CD4-positive, alpha-beta memory T cell (primary cell): ENCODE measurements at regions of chr2 and their contacts with region 1.

Region 1: GRCh38 chr2:157898591-157898996 is 22.5 kb upstream of the ACVR1 start:
- DNase-seq: peak in 4 of 5 donors; percentile 15 to 83 (median 32)
- H3K4me3 ChIP-seq: peak overlapping the region in 1 of 2 donors; percentile 11
- H3K4me3 Mint-ChIP-seq: peak overlapping the region; percentile 40 to 95 (median 90)
- H3K27ac ChIP-seq: peak overlapping the region; percentile 51
- H3K27ac Mint-ChIP-seq: peak overlapping the region; percentile 96 to 100 (median 99)
- H3K4me1 ChIP-seq: peaks cover 77% of the 10 kb centered on the region
- H3K4me1 Mint-ChIP-seq: peaks cover 62 to 79% (median 72%) of the 10 kb centered on the region in 4 donors
- H3K27me3 ChIP-seq: no peaks in the 10 kb centered on the region
- H3K27me3 Mint-ChIP-seq: no peaks in the 10 kb centered on the region

Region 2: GRCh38 chr2:157404363-157404762 is 494.2 kb before region 1 on chr2:
- CTCF ChIA-PET with region 1: interaction called, 3 read pairs
- POLR2A ChIA-PET with region 1: interaction called, 6 read pairs
- intact Hi-C with region 1: loop called (anchors 2 kb)
- DNase-seq: peak; percentile 79 to 87 (median 85)
- H3K4me3 ChIP-seq: no peak overlapping the region
- H3K4me3 Mint-ChIP-seq: peak overlapping the region; percentile 49 to 85 (median 68)
- H3K27ac ChIP-seq: peak overlapping the region; percentile 51
- H3K27ac Mint-ChIP-seq: peak overlapping the region; percentile 95 to 100 (median 99)
- H3K4me1 ChIP-seq: peaks cover 60% of the 10 kb centered on the region
- H3K4me1 Mint-ChIP-seq: peaks cover 52 to 76% (median 63%) of the 10 kb centered on the region in 4 donors
- H3K27me3 ChIP-seq: no peaks in the 10 kb centered on the region
- H3K27me3 Mint-ChIP-seq: no peaks in the 10 kb centered on the region

Region 3: GRCh38 chr2:157777427-157777826 is 121.2 kb before region 1 on chr2:
- CTCF ChIA-PET with region 1: interaction called, 5 read pairs
- POLR2A ChIA-PET with region 1: interaction called, 4 read pairs
- intact Hi-C with region 1: loop called (anchors 2 kb)
- DNase-seq: peak in 4 of 5 donors; percentile 35 to 49 (median 37)
- H3K4me3 ChIP-seq: no peak overlapping the region
- H3K4me3 Mint-ChIP-seq: no peak overlapping the region
- H3K27ac ChIP-seq: no peak overlapping the region
- H3K27ac Mint-ChIP-seq: no peak overlapping the region
- H3K4me1 ChIP-seq: no peaks in the 10 kb centered on the region
- H3K4me1 Mint-ChIP-seq: peaks cover 8 to 13% (median 8%) of the 10 kb centered on the region in 4 donors
- H3K27me3 ChIP-seq: no peaks in the 10 kb centered on the region
- H3K27me3 Mint-ChIP-seq: no peaks in the 10 kb centered on the region

Region 4: GRCh38 chr2:157876066-157876787 is 22.4 kb before region 1 on chr2 and contains the start of gene ACVR1:
- CTCF ChIA-PET with region 1: interaction called, 39 read pairs
- POLR2A ChIA-PET with region 1: interaction called, 308 read pairs
- intact Hi-C with region 1: loop called (anchors 1 kb)
- DNase-seq: peak; percentile 78 to 90 (median 80)
- H3K4me3 ChIP-seq: peak within 1 kb of the TSS; percentile 74 to 76
- H3K4me3 Mint-ChIP-seq: peak within 1 kb of the TSS; percentile 94 to 100 (median 96)
- H3K27ac ChIP-seq: peak within 1 kb of the TSS; percentile 66
- H3K27ac Mint-ChIP-seq: peak within 1 kb of the TSS; percentile 88 to 96 (median 93)
- H3K4me1 ChIP-seq: peaks cover 71% of the 10 kb centered on the region
- H3K4me1 Mint-ChIP-seq: peaks cover 46 to 69% (median 60%) of the 10 kb centered on the region in 4 donors
- H3K27me3 ChIP-seq: no peaks in the 10 kb centered on the region
- H3K27me3 Mint-ChIP-seq: no peaks in the 10 kb centered on the region
- total RNA-seq, gene ACVR1: 26.9 to 31.9 TPM

Region 5: GRCh38 chr2:158006961-158007719 is 108.5 kb after region 1 on chr2:
- CTCF ChIA-PET with region 1: interaction called, 10 read pairs
- POLR2A ChIA-PET with region 1: interaction called, 3 read pairs
- intact Hi-C with region 1: loop called (anchors 1 kb)
- DNase-seq: no peak
- H3K4me3 ChIP-seq: no peak overlapping the region
- H3K4me3 Mint-ChIP-seq: no peak overlapping the region
- H3K27ac ChIP-seq: no peak overlapping the region
- H3K27ac Mint-ChIP-seq: peak overlapping the region in 1 of 7 donors; percentile 15
- H3K4me1 ChIP-seq: no peaks in the 10 kb centered on the region
- H3K4me1 Mint-ChIP-seq: peaks cover 3 to 6% (median 5%) of the 10 kb centered on the region in 4 donors
- H3K27me3 ChIP-seq: no peaks in the 10 kb centered on the region
- H3K27me3 Mint-ChIP-seq: peaks cover 1 to 6% of the 10 kb centered on the region in 2 donors

Region 6: DNA sequence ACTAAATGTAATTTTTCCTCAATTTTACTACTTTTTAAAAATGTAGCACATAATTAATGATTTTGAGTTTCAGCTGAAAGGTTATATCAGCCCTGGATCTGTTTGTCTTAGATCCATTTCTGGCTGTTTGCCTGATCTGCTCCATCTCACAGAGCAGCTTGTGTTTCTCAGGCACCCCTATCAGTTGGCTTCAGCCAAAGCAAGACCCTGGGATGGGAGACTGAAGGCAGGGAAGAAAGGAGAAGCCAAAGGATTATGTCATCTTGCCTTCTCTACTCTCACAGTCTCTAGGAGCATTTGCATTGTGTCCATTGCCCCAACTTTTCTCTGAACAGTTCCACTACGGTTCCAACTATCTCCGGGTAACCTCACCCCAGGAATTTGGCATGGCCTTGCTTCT is 447.4 kb after region 1 on chr2:
- CTCF ChIA-PET with region 1: no interaction called
- POLR2A ChIA-PET with region 1: no interaction called
- intact Hi-C with region 1: no loop called
- DNase-seq: no peak
- H3K4me3 ChIP-seq: no peak overlapping the region
- H3K4me3 Mint-ChIP-seq: no peak overlapping the region
- H3K27ac ChIP-seq: no peak overlapping the region
- H3K27ac Mint-ChIP-seq: no peak overlapping the region
- H3K4me1 ChIP-seq: no peaks in the 10 kb centered on the region
- H3K4me1 Mint-ChIP-seq: no peaks in the 10 kb centered on the region
- H3K27me3 ChIP-seq: no peaks in the 10 kb centered on the region
- H3K27me3 Mint-ChIP-seq: peaks cover 2 to 4% of the 10 kb centered on the region in 2 donors